Naive thymus-derived CD4-positive, alpha-beta T cell (primary cell): ENCODE measurements at regions of chr11 and their contacts with region 1.

Region 1: DNA sequence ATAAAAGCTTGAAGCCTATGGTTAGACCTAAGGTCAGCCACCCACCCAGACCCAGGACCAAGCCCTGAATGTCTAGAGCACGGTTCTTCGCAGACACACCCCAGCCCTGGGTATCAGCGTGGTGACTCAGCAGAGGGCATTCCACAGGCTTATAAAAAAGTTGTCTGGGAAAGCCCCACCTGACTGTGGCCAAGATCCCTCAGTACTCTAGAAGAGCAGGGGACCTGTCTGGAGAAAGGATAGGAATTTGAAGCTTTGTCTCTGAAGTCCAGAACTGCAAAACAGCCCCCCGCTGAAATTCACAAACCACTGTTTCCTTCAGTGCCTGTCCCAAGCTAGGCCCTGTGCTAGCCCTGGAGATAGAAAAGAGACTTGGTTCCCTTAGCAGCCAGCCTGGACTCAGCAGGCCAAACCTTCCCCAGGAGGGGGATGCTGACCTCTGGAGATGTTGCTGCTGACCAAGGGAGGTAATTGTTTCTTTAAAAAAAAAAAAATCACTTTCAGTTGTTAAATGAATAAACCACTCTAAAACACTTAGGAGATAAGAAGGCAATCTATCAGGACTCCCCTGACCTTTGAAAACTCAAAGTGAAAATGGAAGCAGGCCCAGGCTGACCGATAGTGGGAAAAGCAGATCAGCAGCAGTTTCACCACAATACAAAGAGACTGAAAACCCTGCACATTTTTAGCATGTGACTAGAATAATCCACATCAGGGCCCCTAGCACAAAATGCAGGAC is 113.9 kb downstream of the ABTB2 start:
- DNase-seq: peak in 1 of 9 donors; percentile 54
- ATAC-seq: no peak
- H3K4me3 ChIP-seq: no peak overlapping the region
- H3K4me3 Mint-ChIP-seq: peak overlapping the region in 1 of 10 donors; percentile 53
- H3K27ac ChIP-seq: no peak overlapping the region
- H3K27ac Mint-ChIP-seq: peak overlapping the region in 2 of 9 donors; percentile 4 to 13
- H3K4me1 ChIP-seq: peaks cover 12 to 17% of the 10 kb centered on the region in 2 donors
- H3K4me1 Mint-ChIP-seq: peaks cover 16 to 77% (median 33%) of the 10 kb centered on the region in 7 donors
- H3K27me3 ChIP-seq: no peaks in the 10 kb centered on the region
- H3K27me3 Mint-ChIP-seq: peaks cover 0 to 10% (median 0%) of the 10 kb centered on the region in 5 donors

Region 2: DNA sequence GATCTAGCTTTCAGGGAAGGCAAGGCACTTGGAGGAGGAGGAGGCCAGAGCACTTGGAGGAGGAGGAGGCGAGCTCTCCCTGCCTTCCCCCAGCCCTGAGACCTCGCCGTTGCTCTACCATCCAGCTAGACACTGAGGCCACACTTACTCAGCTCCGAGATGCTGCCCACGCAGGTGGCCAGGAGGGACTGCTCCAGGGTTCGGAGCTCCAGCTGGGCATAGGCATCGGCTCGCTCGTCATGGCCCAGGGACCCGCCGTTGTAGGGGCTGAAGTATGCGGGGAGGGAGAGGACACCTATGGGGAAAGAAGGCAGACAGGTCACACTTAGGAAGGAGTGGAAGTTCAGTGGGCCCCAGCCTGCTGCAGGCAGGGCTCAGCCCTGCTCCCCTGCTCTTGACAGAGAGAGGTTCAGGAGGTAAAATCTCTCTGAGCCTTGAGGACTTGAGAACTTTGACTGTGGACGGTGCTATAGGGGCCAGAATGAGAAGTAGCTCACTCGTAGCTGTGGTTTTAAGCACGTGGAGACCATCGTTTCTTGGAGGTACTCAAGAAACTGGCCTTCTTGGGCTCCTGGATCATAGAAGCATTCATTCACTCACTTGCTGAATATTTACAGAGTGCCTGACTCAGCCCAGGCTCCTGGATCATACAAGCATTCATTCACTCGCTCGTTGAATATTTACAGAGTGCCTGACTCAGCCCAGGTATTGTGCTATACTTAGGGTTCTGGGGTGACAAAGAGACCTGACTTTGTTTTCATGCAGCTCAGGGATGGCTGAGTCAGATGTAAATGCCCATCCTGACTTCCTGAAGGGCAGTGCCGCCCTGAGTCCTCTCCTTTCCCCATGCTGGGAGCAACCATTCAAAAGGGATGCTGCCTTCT is 39.3 kb before region 1 on chr11:
- CTCF ChIA-PET with region 1: interaction called, 3 read pairs
- POLR2A ChIA-PET with region 1: no interaction called
- intact Hi-C with region 1: loop called in 1 of 2 experiments (anchors 5 kb)
- DNase-seq: no peak
- ATAC-seq: no peak
- H3K4me3 ChIP-seq: no peak overlapping the region
- H3K4me3 Mint-ChIP-seq: no peak overlapping the region
- H3K27ac ChIP-seq: no peak overlapping the region
- H3K27ac Mint-ChIP-seq: no peak overlapping the region
- H3K4me1 ChIP-seq: peaks cover 0 to 8% of the 10 kb centered on the region in 2 donors
- H3K4me1 Mint-ChIP-seq: peaks cover 6 to 41% (median 16%) of the 10 kb centered on the region in 7 donors
- H3K27me3 ChIP-seq: no peaks in the 10 kb centered on the region
- H3K27me3 Mint-ChIP-seq: no peaks in the 10 kb centered on the region

Region 3: GRCh38 chr11:34274723-34275401 is 31.0 kb after region 1 on chr11:
- CTCF ChIA-PET with region 1: no interaction called
- POLR2A ChIA-PET with region 1: no interaction called
- intact Hi-C with region 1: no loop called
- DNase-seq: no peak
- ATAC-seq: no peak
- H3K4me3 ChIP-seq: no peak overlapping the region
- H3K4me3 Mint-ChIP-seq: no peak overlapping the region
- H3K27ac ChIP-seq: no peak overlapping the region
- H3K27ac Mint-ChIP-seq: no peak overlapping the region
- H3K4me1 ChIP-seq: no peaks in the 10 kb centered on the region
- H3K4me1 Mint-ChIP-seq: no peaks in the 10 kb centered on the region
- H3K27me3 ChIP-seq: no peaks in the 10 kb centered on the region
- H3K27me3 Mint-ChIP-seq: no peaks in the 10 kb centered on the region